CD4-positive, alpha-beta T cell (primary cell): ENCODE measurements at regions of chr1 and their contacts with region 1.

Region 1: DNA sequence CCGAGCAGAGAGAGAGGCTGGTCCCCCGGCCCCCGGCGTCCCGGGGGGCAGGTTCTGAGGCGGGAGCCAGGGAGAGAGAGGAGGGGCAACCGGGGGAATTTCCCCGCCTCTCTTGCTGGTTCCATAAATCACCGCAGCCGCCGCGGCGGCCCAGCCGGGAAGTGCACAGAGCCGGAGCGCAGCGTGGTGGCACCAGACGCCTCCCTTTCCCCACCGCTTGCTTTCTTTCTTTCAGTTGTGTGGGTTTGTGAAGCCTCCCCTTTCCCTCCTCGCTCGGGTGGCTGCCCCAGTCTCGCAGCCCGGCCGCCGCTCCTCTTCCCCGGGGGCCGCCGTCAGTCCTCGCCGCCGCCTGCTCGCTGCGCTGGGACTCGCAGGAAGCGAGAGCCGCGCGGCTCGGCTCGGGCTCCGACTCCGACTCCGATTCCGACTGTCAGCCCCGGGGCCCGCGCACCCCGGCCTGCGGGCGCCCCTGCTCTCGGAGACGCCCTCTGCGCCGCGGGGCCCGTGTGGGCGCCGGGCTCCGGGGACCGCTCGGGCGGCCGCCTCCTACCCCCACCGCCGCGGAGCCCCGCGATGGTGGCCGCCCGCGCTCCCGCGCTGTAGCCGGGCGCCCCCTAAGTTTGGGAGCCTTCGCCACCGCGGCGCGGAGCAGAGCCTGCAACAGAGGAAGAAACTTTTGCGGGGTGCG is at the start of gene CACHD1:
- DNase-seq: peak in 13 of 14 experiments; percentile 24 to 83 (median 52)
- ATAC-seq: peak; percentile 86
- H3K4me3 ChIP-seq: peak within 1 kb of the TSS; percentile 55
- H3K4me3 Mint-ChIP-seq: peak within 1 kb of the TSS; percentile 92
- H3K27ac ChIP-seq: no peak within 1 kb of the TSS
- H3K27ac Mint-ChIP-seq: peak within 1 kb of the TSS; percentile 62
- H3K4me1 ChIP-seq: peaks cover 18% of the 10 kb centered on the region
- H3K4me1 Mint-ChIP-seq: peaks cover 41% of the 10 kb centered on the region
- H3K27me3 ChIP-seq: peaks cover 14 to 31% of the 10 kb centered on the region in 2 experiments
- H3K27me3 Mint-ChIP-seq: peaks cover 43% of the 10 kb centered on the region
- CTCF ChIP-seq: peak; percentile 40
- total RNA-seq, gene CACHD1: 6.2 to 7.1 TPM

Region 2: GRCh38 chr1:63892632-63893395 is 577.3 kb before region 1 on chr1:
- CTCF ChIA-PET with region 1: no interaction called
- POLR2A ChIA-PET with region 1: no interaction called
- intact Hi-C with region 1: no loop called
- DNase-seq: peak in 1 of 14 experiments; percentile 16
- ATAC-seq: no peak
- H3K4me3 ChIP-seq: no peak overlapping the region
- H3K4me3 Mint-ChIP-seq: no peak overlapping the region
- H3K27ac ChIP-seq: no peak overlapping the region
- H3K27ac Mint-ChIP-seq: no peak overlapping the region
- H3K4me1 ChIP-seq: no peaks in the 10 kb centered on the region
- H3K4me1 Mint-ChIP-seq: no peaks in the 10 kb centered on the region
- H3K27me3 ChIP-seq: peaks cover 0 to 3% of the 10 kb centered on the region in 2 experiments
- H3K27me3 Mint-ChIP-seq: peaks cover 3% of the 10 kb centered on the region
- CTCF ChIP-seq: no peak

Region 3: GRCh38 chr1:64268653-64269557 is 201.2 kb before region 1 on chr1:
- CTCF ChIA-PET with region 1: no interaction called
- POLR2A ChIA-PET with region 1: interaction called, 3 read pairs
- intact Hi-C with region 1: loop called in 1 of 2 experiments (anchors 5 kb)
- DNase-seq: peak; percentile 19 to 83 (median 56)
- ATAC-seq: peak; percentile 71
- H3K4me3 ChIP-seq: no peak overlapping the region
- H3K4me3 Mint-ChIP-seq: no peak overlapping the region
- H3K27ac ChIP-seq: no peak overlapping the region
- H3K27ac Mint-ChIP-seq: no peak overlapping the region
- H3K4me1 ChIP-seq: no peaks in the 10 kb centered on the region
- H3K4me1 Mint-ChIP-seq: no peaks in the 10 kb centered on the region
- H3K27me3 ChIP-seq: peaks cover 0 to 10% of the 10 kb centered on the region in 2 experiments
- H3K27me3 Mint-ChIP-seq: peaks cover 45% of the 10 kb centered on the region
- CTCF ChIP-seq: peak; percentile 84

Region 4: GRCh38 chr1:64421377-64421776 is 48.7 kb before region 1 on chr1:
- CTCF ChIA-PET with region 1: no interaction called
- POLR2A ChIA-PET with region 1: no interaction called
- intact Hi-C with region 1: no loop called
- DNase-seq: no peak
- ATAC-seq: no peak
- H3K4me3 ChIP-seq: no peak overlapping the region
- H3K4me3 Mint-ChIP-seq: no peak overlapping the region
- H3K27ac ChIP-seq: no peak overlapping the region
- H3K27ac Mint-ChIP-seq: no peak overlapping the region
- H3K4me1 ChIP-seq: no peaks in the 10 kb centered on the region
- H3K4me1 Mint-ChIP-seq: no peaks in the 10 kb centered on the region
- H3K27me3 ChIP-seq: no peaks in the 10 kb centered on the region
- H3K27me3 Mint-ChIP-seq: no peaks in the 10 kb centered on the region
- CTCF ChIP-seq: no peak

Region 5: GRCh38 chr1:64437453-64437852 is 32.7 kb before region 1 on chr1:
- CTCF ChIA-PET with region 1: no interaction called
- POLR2A ChIA-PET with region 1: no interaction called
- intact Hi-C with region 1: no loop called
- DNase-seq: no peak
- ATAC-seq: no peak
- H3K4me3 ChIP-seq: no peak overlapping the region
- H3K4me3 Mint-ChIP-seq: no peak overlapping the region
- H3K27ac ChIP-seq: no peak overlapping the region
- H3K27ac Mint-ChIP-seq: no peak overlapping the region
- H3K4me1 ChIP-seq: no peaks in the 10 kb centered on the region
- H3K4me1 Mint-ChIP-seq: no peaks in the 10 kb centered on the region
- H3K27me3 ChIP-seq: no peaks in the 10 kb centered on the region
- H3K27me3 Mint-ChIP-seq: no peaks in the 10 kb centered on the region
- CTCF ChIP-seq: no peak

Region 6: DNA sequence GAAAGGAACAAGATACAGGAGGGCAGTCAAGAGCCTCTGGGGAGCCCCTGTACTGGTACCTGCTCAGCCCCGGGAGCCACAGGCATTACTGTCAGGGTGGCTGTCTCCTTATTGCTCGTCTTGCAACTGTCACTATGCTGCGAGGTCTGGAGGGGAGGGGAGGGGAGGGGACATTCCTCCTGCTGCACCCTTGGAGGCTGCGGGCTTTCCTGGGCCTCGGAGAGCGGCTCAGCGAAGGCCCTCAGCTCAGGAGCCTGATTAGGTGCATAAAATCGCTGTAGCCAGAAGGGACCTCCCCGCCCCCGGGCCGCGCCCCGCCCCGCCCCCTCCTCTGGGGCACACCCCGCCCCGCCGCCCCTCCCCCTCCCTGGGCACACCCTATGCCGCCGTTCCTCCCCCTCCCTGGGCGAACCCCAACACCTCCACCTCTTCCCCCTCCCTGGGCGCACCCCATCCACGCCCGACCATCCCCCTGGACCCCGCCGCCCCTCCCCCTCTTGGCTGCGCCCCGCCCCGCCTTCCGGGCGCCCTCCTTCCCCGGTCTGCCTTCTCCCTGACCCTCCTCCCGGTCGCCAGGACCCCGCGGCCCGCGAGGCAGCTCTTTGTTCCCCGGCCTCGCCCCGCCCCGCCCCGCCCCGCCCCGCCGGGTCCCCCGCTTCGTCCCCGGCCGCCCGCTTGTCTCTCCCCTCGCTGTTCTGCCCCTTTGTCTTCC is 35.3 kb after region 1 on chr1:
- CTCF ChIA-PET with region 1: no interaction called
- POLR2A ChIA-PET with region 1: no interaction called
- intact Hi-C with region 1: loop called in 1 of 2 experiments (anchors 5 kb)
- DNase-seq: peak; percentile 14 to 75 (median 53)
- ATAC-seq: peak; percentile 63
- H3K4me3 ChIP-seq: peak overlapping the region; percentile 47
- H3K4me3 Mint-ChIP-seq: peak overlapping the region; percentile 90
- H3K27ac ChIP-seq: peak overlapping the region in 1 of 2 donors; percentile 2
- H3K27ac Mint-ChIP-seq: peak overlapping the region; percentile 82
- H3K4me1 ChIP-seq: peaks cover 12% of the 10 kb centered on the region
- H3K4me1 Mint-ChIP-seq: peaks cover 60% of the 10 kb centered on the region
- H3K27me3 ChIP-seq: peaks cover 0 to 4% of the 10 kb centered on the region in 2 experiments
- H3K27me3 Mint-ChIP-seq: peaks cover 5% of the 10 kb centered on the region
- CTCF ChIP-seq: no peak

Region 7: DNA sequence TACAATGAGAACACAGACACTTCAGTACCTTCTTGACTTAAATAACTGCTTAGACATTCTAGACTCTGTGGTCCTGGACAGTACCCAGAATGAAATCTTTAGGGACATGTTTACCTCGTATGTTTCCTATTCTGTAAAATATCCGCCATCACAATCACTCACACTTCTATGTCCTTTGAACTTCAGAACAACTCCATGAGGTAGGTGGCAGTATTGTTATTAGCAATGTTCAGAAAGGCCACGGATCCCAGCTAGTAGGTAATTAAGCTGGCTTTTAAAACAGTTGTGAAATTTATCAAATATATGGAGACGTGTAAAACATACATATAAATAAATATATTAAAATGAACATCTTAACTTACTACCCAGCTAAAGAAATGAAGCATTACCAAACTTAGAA is 83.2 kb after region 1 on chr1:
- CTCF ChIA-PET with region 1: no interaction called
- POLR2A ChIA-PET with region 1: no interaction called
- intact Hi-C with region 1: loop called (anchors 2 kb)
- DNase-seq: peak in 1 of 14 experiments; percentile 16
- ATAC-seq: no peak
- H3K4me3 ChIP-seq: no peak overlapping the region
- H3K4me3 Mint-ChIP-seq: no peak overlapping the region
- H3K27ac ChIP-seq: no peak overlapping the region
- H3K27ac Mint-ChIP-seq: peak overlapping the region; percentile 91
- H3K4me1 ChIP-seq: peaks cover 3% of the 10 kb centered on the region
- H3K4me1 Mint-ChIP-seq: peaks cover 58% of the 10 kb centered on the region
- H3K27me3 ChIP-seq: no peaks in the 10 kb centered on the region
- H3K27me3 Mint-ChIP-seq: no peaks in the 10 kb centered on the region
- CTCF ChIP-seq: peak; percentile 24

Region 8: GRCh38 chr1:64584479-64584878 is 114.4 kb after region 1 on chr1:
- CTCF ChIA-PET with region 1: no interaction called
- POLR2A ChIA-PET with region 1: no interaction called
- intact Hi-C with region 1: loop called in 1 of 2 experiments (anchors 10 kb)
- DNase-seq: peak in 1 of 14 experiments; percentile 4
- ATAC-seq: no peak
- H3K4me3 ChIP-seq: no peak overlapping the region
- H3K4me3 Mint-ChIP-seq: no peak overlapping the region
- H3K27ac ChIP-seq: no peak overlapping the region
- H3K27ac Mint-ChIP-seq: no peak overlapping the region
- H3K4me1 ChIP-seq: no peaks in the 10 kb centered on the region
- H3K4me1 Mint-ChIP-seq: peaks cover 20% of the 10 kb centered on the region
- H3K27me3 ChIP-seq: no peaks in the 10 kb centered on the region
- H3K27me3 Mint-ChIP-seq: no peaks in the 10 kb centered on the region
- CTCF ChIP-seq: peak; percentile 29

Region 9: GRCh38 chr1:64675718-64676345 is 205.7 kb after region 1 on chr1:
- CTCF ChIA-PET with region 1: interaction called, 3 read pairs
- POLR2A ChIA-PET with region 1: no interaction called
- intact Hi-C with region 1: loop called (anchors 2 to 5 kb)
- DNase-seq: peak in 3 of 14 experiments; percentile 14 to 31 (median 29)
- ATAC-seq: peak; percentile 51
- H3K4me3 ChIP-seq: no peak overlapping the region
- H3K4me3 Mint-ChIP-seq: no peak overlapping the region
- H3K27ac ChIP-seq: no peak overlapping the region
- H3K27ac Mint-ChIP-seq: no peak overlapping the region
- H3K4me1 ChIP-seq: no peaks in the 10 kb centered on the region
- H3K4me1 Mint-ChIP-seq: no peaks in the 10 kb centered on the region
- H3K27me3 ChIP-seq: no peaks in the 10 kb centered on the region
- H3K27me3 Mint-ChIP-seq: no peaks in the 10 kb centered on the region
- CTCF ChIP-seq: peak; percentile 89

Region 10: DNA sequence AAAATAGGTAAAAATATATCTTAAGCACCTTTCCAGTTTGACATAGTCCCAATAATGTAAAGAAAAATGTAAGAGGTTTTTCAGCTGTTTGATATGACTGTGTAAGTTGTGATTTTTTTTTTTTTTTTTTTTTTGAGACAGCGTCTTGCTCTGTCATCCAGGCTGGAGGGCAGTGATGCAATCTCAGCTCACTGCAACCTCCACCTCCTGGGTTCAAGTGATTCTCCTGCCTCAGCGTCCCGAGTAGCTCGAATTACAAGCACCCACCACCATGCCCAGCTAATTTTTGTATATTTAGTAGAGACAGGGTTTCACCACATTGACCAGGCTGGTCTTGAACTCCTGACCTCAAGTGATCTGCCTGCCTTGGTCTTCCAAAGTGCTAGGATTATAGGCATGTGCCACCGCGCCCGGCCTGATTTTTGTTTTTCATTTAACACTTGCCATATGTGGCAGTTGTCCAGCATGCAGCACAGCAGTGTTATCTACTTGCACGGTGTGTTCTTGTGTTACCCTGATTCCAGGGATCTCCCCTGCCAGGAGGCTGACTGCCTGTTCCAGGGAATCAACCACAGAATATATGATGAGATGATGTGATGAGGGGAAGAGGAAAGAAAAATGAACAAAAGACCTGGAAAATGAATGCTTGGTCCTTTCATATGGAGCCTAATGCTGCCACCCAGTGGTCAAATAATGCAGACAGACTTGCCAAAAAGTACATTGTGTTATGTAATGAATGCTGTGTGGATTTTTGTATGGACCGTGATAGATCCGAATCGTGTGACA is 353.8 kb after region 1 on chr1:
- CTCF ChIA-PET with region 1: no interaction called
- POLR2A ChIA-PET with region 1: no interaction called
- intact Hi-C with region 1: loop called in 1 of 2 experiments (anchors 5 kb)
- DNase-seq: peak; percentile 28 to 82 (median 50)
- ATAC-seq: peak; percentile 65
- H3K4me3 ChIP-seq: no peak overlapping the region
- H3K4me3 Mint-ChIP-seq: peak overlapping the region; percentile 3
- H3K27ac ChIP-seq: no peak overlapping the region
- H3K27ac Mint-ChIP-seq: no peak overlapping the region
- H3K4me1 ChIP-seq: peaks cover 19% of the 10 kb centered on the region
- H3K4me1 Mint-ChIP-seq: peaks cover 28% of the 10 kb centered on the region
- H3K27me3 ChIP-seq: no peaks in the 10 kb centered on the region
- H3K27me3 Mint-ChIP-seq: no peaks in the 10 kb centered on the region
- CTCF ChIP-seq: peak; percentile 82